Caco-2 (cell line): ENCODE measurements at regions of chr2 and their contacts with region 1.

Region 1: DNA sequence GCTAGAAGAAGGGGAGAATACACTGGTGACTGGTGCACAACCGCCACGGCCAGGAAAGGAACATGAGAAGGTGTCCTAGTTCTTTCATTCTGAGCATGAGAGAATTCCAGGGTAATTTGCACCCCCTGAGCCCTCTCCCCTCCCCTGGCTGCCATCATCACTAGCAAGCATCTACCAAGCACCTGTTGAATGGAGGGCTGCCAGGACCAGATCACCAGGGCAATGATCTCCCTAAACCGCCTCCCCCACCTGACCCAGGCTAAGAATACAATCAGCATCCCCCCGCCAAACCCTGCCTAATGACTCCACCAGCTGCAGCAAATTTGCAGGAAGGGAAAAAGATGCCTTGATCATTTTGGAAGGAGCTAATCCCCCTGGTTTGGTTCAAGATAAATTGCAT is 100.2 kb downstream of the STPG4 start:
- DNase-seq: no peak
- H3K4me3 ChIP-seq: no peak overlapping the region
- H3K4me3 Mint-ChIP-seq: no peak overlapping the region
- H3K27ac Mint-ChIP-seq: no peak overlapping the region
- H3K4me1 ChIP-seq: no peaks in the 10 kb centered on the region
- H3K4me1 Mint-ChIP-seq: peaks cover 19% of the 10 kb centered on the region
- H3K27me3 ChIP-seq: no peaks in the 10 kb centered on the region
- H3K27me3 Mint-ChIP-seq: no peaks in the 10 kb centered on the region
- CTCF ChIP-seq: no peak

Region 2: DNA sequence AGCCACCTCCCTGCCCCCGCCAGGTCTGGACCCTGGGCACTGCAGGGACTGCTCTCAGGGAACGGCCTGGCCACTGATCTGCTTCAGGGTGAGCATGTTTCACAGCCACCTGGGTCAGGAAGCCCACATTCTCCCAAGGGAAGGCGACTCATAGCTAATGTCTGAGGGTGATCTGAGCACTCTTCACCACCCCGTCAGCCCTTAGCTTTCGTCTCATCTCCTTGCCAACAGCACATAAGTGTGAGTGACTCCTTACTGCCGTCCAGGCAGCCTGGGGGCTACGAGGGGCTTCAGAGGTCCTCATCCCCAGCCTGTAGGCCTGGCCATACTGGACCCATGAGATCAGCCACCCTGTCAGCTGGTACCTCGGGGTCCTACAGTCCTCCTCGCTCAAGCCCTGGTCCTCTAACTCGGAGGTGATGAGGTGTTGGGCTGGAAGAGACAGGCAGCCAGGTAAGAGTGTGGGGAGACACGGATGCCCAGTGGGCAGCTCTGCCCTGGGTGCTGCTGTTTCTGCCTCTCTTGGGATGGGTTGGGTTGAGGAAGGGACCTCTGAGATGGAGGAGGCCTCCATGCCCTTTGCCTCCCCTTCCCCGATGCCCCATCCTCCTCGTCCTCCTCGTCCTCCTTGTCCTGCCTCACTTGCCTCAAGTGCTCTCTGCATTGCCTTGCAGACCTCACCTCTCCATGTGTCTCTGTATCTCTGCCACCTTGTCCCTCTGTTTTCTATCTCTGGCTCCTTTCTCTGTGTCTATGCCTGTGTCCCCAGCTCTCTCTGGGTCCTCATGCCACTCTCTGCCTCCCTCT is 227.0 kb before region 1 on chr2:
- CTCF ChIA-PET with region 1: no interaction called
- POLR2A ChIA-PET with region 1: no interaction called
- intact Hi-C with region 1: no loop called
- DNase-seq: no peak
- H3K4me3 ChIP-seq: no peak overlapping the region
- H3K4me3 Mint-ChIP-seq: no peak overlapping the region
- H3K27ac Mint-ChIP-seq: no peak overlapping the region
- H3K4me1 ChIP-seq: peaks cover 5% of the 10 kb centered on the region; the same call in 1 of the 2 replicates
- H3K4me1 Mint-ChIP-seq: no peaks in the 10 kb centered on the region
- H3K27me3 ChIP-seq: no peaks in the 10 kb centered on the region
- H3K27me3 Mint-ChIP-seq: peaks cover 3% of the 10 kb centered on the region
- CTCF ChIP-seq: no peak

Region 3: GRCh38 chr2:47043142-47043890 is 11.6 kb before region 1 on chr2:
- CTCF ChIA-PET with region 1: interaction called, 3 read pairs
- POLR2A ChIA-PET with region 1: no interaction called
- intact Hi-C with region 1: loop called (anchors 1 kb)
- DNase-seq: peak; percentile 74 to 77
- H3K4me3 ChIP-seq: no peak overlapping the region
- H3K4me3 Mint-ChIP-seq: peak overlapping the region; percentile 2
- H3K27ac Mint-ChIP-seq: peak overlapping the region; percentile 95
- H3K4me1 ChIP-seq: peaks cover 56% of the 10 kb centered on the region
- H3K4me1 Mint-ChIP-seq: peaks cover 56% of the 10 kb centered on the region
- H3K27me3 ChIP-seq: no peaks in the 10 kb centered on the region
- H3K27me3 Mint-ChIP-seq: no peaks in the 10 kb centered on the region
- CTCF ChIP-seq: no peak

Region 4: GRCh38 chr2:47414682-47415458 is 360.0 kb after region 1 on chr2:
- CTCF ChIA-PET with region 1: no interaction called
- POLR2A ChIA-PET with region 1: interaction called, 15 read pairs
- intact Hi-C with region 1: no loop called
- DNase-seq: no peak
- H3K4me3 ChIP-seq: no peak overlapping the region
- H3K4me3 Mint-ChIP-seq: no peak overlapping the region
- H3K27ac Mint-ChIP-seq: no peak overlapping the region
- H3K4me1 ChIP-seq: no peaks in the 10 kb centered on the region
- H3K4me1 Mint-ChIP-seq: no peaks in the 10 kb centered on the region
- H3K27me3 ChIP-seq: no peaks in the 10 kb centered on the region
- H3K27me3 Mint-ChIP-seq: no peaks in the 10 kb centered on the region
- CTCF ChIP-seq: no peak